AG04450 (cell line): ENCODE measurements at regions of chr4 and their contacts with region 1.

Region 1: GRCh38 chr4:179867300-179867878 is 2375.8 kb upstream of the TENM3 start:
- DNase-seq: peak; percentile 44
- H3K4me3 ChIP-seq: no peak overlapping the region
- H3K27ac ChIP-seq: no peak overlapping the region
- H3K27me3 ChIP-seq: no peaks in the 10 kb centered on the region
- CTCF ChIP-seq: peak; percentile 96

Region 2: DNA sequence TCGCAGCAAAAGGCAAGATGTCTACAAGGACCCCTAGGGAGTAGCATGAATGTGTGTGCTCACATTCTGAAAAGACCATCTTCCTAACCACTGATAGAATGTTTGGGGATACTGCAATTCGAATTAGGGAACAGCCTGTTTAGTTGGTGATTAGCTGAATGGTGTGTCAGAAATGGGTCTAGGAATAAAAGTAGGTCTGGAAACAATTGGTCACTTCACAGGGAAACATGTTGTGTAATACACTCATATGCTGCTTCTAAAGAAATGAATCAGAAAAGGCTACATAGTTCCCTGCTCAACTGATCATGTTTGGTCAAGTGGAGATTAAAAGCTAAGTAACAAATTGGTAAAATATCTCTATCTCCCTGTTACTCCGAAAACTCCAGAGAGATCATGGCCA is 13.4 kb after region 1 on chr4:
- CTCF ChIA-PET with region 1: interaction called, 10 read pairs
- POLR2A ChIA-PET with region 1: no interaction called
- DNase-seq: no peak
- H3K4me3 ChIP-seq: no peak overlapping the region
- H3K27ac ChIP-seq: no peak overlapping the region
- H3K27me3 ChIP-seq: no peaks in the 10 kb centered on the region
- CTCF ChIP-seq: no peak

Region 3: GRCh38 chr4:180028682-180029081 is 161.3 kb after region 1 on chr4:
- CTCF ChIA-PET with region 1: interaction called, 89 read pairs
- POLR2A ChIA-PET with region 1: no interaction called
- DNase-seq: peak; percentile 39
- H3K4me3 ChIP-seq: no peak overlapping the region
- H3K27ac ChIP-seq: no peak overlapping the region
- H3K27me3 ChIP-seq: no peaks in the 10 kb centered on the region
- CTCF ChIP-seq: peak; percentile 65

Region 4: GRCh38 chr4:180341926-180342325 is 474.5 kb after region 1 on chr4:
- CTCF ChIA-PET with region 1: no interaction called
- POLR2A ChIA-PET with region 1: no interaction called
- DNase-seq: no peak
- H3K4me3 ChIP-seq: no peak overlapping the region
- H3K27ac ChIP-seq: no peak overlapping the region
- H3K27me3 ChIP-seq: no peaks in the 10 kb centered on the region
- CTCF ChIP-seq: no peak